WTC11 (cell line): ENCODE measurements at regions of chr10 and their contacts with region 1.

Region 1: DNA sequence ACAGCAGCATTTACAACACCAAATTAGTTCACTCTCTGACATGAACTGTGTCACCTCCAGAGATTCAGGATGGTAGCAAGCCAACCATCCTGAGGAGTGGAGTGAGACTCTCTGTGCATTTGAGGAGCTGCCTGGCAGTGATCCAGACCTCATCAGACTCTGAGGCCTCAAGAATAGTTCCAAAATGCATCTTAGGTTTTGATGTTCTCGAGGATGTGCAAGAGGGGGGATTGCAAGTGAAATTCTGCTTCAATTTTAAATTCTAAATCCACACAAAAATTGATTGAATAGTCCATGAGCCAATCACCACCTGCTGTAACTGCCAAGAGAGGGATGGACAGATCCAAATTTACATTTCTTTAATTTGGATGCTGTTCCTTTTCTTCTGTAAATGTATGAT is 49.7 kb downstream of the SLK start:
- DNase-seq: no peak
- ATAC-seq: no peak
- H3K4me3 Mint-ChIP-seq: no peak overlapping the region
- H3K27ac Mint-ChIP-seq: 0 out of 2 replicates have a peak overlapping the region, but pooled peaks have one; percentile 20
- H3K4me1 Mint-ChIP-seq: peaks cover 6% of the 10 kb centered on the region; the same call in 1 of the 2 replicates
- H3K27me3 Mint-ChIP-seq: no peaks in the 10 kb centered on the region
- CTCF ChIP-seq: no peak

Region 2: GRCh38 chr10:104002911-104003310 is 13.8 kb before region 1 on chr10:
- CTCF ChIA-PET with region 1: no interaction called
- POLR2A ChIA-PET with region 1: no interaction called
- DNase-seq: no peak
- ATAC-seq: no peak
- H3K4me3 Mint-ChIP-seq: no peak overlapping the region
- H3K27ac Mint-ChIP-seq: no peak overlapping the region
- H3K4me1 Mint-ChIP-seq: no peaks in the 10 kb centered on the region
- H3K27me3 Mint-ChIP-seq: no peaks in the 10 kb centered on the region
- CTCF ChIP-seq: no peak

Region 3: DNA sequence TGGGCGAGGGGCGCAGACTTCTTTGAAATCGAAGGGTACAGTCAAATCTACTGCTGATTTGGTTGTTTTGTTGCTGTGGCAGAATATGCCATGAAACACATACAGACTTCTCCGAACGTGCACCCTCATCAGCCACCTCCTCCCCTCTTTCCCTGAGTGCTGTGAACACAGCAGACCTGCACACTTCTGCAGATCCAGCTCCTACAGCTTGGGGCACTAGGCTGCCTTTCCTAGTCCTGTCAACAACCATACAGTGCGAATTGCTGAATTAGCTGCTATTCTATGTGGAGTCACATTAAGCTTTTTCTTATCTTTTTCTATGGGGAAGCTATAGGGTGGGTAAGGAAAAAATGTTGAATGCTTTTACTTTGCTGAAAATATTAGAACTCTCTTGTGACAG is 11.5 kb after region 1 on chr10:
- CTCF ChIA-PET with region 1: interaction called, 10 read pairs
- POLR2A ChIA-PET with region 1: no interaction called
- DNase-seq: peak; percentile 52
- ATAC-seq: peak; percentile 96
- H3K4me3 Mint-ChIP-seq: no peak overlapping the region
- H3K27ac Mint-ChIP-seq: no peak overlapping the region
- H3K4me1 Mint-ChIP-seq: peaks cover 20% of the 10 kb centered on the region
- H3K27me3 Mint-ChIP-seq: no peaks in the 10 kb centered on the region
- CTCF ChIP-seq: no peak